ENCODE measurements at regions of chr6 and their contacts with region 1.

Region 1: DNA sequence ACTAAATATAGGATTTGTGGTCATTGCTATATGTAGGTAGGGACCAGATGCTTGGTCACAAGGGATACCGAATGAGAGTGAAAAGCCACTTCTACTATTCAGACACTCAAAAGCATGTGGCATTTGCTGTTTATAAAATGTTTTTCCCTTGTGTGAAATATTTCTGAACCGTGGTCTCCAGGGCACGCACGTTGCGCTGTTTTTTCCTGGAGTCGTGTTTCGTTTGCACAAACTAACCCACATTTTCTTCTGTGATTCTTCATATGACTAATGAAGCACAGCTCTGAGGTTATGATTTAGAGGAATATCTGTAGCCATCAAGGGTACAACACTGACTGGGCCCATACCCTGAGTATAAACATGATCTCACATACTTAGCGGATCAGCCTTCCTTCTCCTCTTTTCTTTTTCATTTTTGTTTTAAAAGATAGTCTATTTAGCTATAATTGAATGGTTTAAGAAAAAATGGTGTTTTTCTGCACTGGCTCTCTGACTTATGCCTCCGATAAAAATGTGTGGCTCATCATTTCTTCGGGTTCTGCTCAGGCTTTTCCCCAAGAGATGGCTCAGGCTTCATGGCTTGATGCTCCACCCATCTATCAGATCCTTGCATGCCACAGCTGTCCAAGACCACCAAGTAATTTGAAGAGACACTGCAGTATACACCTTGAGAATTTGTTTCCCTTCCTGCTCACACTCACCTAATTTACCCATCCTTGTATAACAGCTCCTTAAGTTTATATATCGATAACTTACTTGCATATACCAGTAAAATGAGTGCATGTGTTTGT is 59.9 kb upstream of the HBS1L start:
- DNase-seq: peak; percentile 82
- ATAC-seq: peak; percentile 70
- H3K4me3 Mint-ChIP-seq: peak overlapping the region; percentile 54
- H3K27ac Mint-ChIP-seq: peak overlapping the region; percentile 95
- H3K4me1 Mint-ChIP-seq: peaks cover 79% of the 10 kb centered on the region
- H3K27me3 Mint-ChIP-seq: no peaks in the 10 kb centered on the region

Region 2: GRCh38 chr6:134247231-134247833 is 867.2 kb before region 1 on chr6:
- CTCF ChIA-PET with region 1: no interaction called
- POLR2A ChIA-PET with region 1: no interaction called
- intact Hi-C with region 1: loop called in 1 of 2 experiments (anchors 10 kb)
- DNase-seq: peak; percentile 84
- ATAC-seq: peak; percentile 91
- H3K4me3 Mint-ChIP-seq: peak overlapping the region; percentile 16
- H3K27ac Mint-ChIP-seq: peak overlapping the region; percentile 94
- H3K4me1 Mint-ChIP-seq: peaks cover 56% of the 10 kb centered on the region
- H3K27me3 Mint-ChIP-seq: no peaks in the 10 kb centered on the region

Region 3: GRCh38 chr6:135014353-135014832 is 100.2 kb before region 1 on chr6:
- CTCF ChIA-PET with region 1: no interaction called
- POLR2A ChIA-PET with region 1: no interaction called
- intact Hi-C with region 1: loop called in 1 of 2 experiments (anchors 1 kb)
- DNase-seq: peak; percentile 23
- ATAC-seq: peak; percentile 87
- H3K4me3 Mint-ChIP-seq: peak overlapping the region; percentile 18
- H3K27ac Mint-ChIP-seq: peak overlapping the region; percentile 45
- H3K4me1 Mint-ChIP-seq: peaks cover 59% of the 10 kb centered on the region
- H3K27me3 Mint-ChIP-seq: no peaks in the 10 kb centered on the region

Region 4: DNA sequence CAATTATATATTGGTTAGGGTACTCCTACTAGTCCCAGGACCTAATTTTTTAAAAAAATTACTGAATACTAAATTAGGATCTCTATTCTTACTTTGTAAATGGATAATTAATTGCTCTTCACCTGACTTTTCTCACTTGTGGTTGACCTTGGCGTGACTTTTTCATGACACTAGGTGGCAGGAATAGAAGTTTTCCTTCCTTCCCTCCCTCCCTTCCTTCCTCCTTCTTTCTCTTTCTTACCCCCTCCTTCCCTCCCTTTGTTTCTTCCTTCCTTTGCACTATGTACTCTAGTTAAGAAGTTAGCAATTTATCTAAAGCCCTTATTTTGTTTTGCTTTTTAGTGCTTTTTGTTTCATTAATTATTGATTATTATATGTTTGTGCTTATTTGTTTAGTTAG is 39.5 kb before region 1 on chr6:
- CTCF ChIA-PET with region 1: no interaction called
- POLR2A ChIA-PET with region 1: no interaction called
- intact Hi-C with region 1: no loop called
- DNase-seq: no peak
- ATAC-seq: no peak
- H3K4me3 Mint-ChIP-seq: no peak overlapping the region
- H3K27ac Mint-ChIP-seq: no peak overlapping the region
- H3K4me1 Mint-ChIP-seq: peaks cover 15% of the 10 kb centered on the region
- H3K27me3 Mint-ChIP-seq: no peaks in the 10 kb centered on the region

Region 5: DNA sequence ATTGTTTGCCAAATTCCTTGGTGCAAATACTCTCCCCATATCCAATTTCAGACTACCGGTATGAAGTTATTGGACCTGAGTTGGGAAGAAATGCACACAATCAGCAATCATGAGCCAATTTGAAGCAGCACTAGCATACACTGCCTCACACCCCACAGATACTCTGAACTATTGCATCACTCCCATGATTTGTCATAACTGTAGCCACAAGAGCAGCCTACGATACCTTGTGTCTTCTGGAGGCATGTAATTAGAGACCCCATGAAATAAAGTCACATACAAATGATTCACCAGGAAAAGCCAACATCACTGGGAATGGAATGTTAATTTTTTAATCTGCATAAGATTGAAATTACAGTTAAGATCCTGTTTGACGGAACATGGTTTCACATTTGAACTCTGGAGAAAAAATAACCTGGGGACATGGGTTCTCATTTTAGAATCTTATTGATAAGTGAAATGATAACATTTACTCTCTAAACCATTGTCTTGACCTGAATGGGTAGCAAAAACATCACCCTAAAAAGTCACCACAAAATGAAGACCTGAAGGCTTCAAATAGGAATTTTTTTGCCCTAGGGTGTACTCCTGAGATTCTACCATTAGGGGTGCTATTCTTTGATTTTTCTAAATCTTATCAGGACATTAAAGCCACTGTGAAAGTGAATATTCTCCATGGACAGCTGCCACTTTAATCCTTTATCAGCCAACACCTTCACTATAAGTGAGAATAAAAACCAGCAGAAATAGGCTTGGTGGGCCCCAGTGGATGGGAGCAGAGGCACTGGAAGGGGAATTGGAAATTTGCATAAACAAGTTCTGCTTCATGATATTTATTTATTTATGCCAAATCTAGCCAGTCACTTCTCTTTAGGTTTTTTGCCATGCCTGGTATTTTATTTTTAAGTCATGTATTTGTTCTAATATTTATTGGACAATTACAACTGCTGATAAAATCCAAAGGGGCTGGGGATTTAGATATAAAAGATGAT is 25.4 kb before region 1 on chr6:
- CTCF ChIA-PET with region 1: interaction called, 19 read pairs
- POLR2A ChIA-PET with region 1: interaction called, 7 read pairs
- intact Hi-C with region 1: loop called (anchors 1 kb)
- DNase-seq: peak; percentile 54
- ATAC-seq: peak; percentile 77
- H3K4me3 Mint-ChIP-seq: peak overlapping the region; percentile 48
- H3K27ac Mint-ChIP-seq: peak overlapping the region; percentile 93
- H3K4me1 Mint-ChIP-seq: peaks cover 86% of the 10 kb centered on the region
- H3K27me3 Mint-ChIP-seq: no peaks in the 10 kb centered on the region

Region 6: DNA sequence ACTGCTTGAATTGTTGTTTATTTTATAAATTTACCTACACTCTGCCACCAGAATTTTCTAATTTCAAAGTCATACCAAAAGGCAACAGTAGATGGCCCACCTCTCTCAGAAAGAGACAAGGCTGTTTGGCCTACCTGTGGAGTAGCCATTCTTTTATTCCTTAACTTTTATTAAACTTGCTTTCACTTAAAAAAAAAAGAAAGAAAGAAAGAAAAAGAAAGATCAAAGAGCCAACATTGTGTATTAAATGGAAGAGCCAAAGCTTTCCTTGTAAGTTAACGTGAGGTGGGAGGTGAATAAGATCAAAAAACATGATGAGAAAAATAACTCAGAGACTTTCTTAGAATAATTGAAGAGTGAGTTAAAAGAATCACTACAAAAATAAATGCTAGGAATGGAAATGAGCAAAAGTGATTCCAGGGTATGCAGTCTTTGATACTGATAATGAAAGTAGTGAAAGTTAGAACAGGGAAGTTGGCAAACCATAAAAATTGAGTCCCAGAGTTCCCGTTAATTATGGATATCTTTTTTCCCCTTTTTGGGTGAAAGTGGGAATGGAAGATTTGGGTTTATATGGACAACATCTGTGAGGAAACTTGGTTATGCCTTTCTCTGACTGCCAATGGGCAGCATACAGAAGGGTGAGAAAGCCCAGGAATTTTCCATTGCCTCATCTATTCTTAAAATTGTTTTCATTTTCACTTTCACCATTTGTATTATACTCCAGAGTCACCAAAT is 30.7 kb after region 1 on chr6:
- CTCF ChIA-PET with region 1: interaction called, 5 read pairs
- POLR2A ChIA-PET with region 1: no interaction called
- intact Hi-C with region 1: loop called (anchors 1 kb)
- DNase-seq: no peak
- ATAC-seq: peak; percentile 52
- H3K4me3 Mint-ChIP-seq: peak overlapping the region; percentile 2
- H3K27ac Mint-ChIP-seq: peak overlapping the region; percentile 88
- H3K4me1 Mint-ChIP-seq: peaks cover 65% of the 10 kb centered on the region
- H3K27me3 Mint-ChIP-seq: no peaks in the 10 kb centered on the region

Region 7: DNA sequence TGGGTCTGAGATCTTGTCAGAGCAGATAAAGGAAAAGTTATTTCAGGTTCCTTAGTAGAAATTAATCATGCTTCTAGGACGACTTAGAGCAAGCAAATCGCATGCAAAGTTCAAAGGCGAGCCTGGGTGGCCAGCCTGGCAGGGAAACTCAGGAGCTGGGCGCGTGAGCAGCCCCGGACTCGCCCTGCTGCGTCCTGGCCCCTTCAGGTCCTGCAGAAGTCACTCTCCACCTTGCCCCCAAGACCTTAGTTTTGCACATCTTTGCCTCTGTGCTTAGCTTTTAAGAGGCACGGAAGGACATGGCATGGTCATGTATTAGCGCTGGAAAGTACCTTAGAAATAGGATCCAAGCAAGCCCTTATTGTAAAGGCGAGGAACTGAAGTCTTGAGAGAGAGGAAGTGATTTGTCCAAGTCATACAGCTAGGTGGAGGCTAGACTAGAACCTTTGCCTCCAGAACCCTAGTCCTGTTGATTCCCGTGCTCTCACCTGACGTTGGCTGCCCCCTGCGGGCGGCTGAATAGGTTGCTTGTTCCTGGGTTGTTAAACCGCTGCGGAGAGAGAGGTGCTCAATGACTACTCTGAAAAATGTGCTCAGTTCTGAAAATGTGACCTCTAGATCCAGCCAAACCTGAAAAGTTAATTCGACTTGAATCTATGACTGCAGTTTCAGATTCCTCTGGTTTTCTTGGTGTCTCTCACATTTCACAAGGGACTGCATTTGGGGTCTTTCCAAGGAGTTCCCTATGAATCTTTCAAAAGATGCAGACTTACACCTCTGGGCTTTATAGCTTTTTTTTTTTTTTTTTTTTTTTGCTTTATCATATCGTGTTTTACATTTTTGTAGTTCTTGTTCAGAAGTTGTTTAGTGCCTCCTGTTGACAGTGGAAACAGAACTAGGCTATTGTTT is 69.2 kb after region 1 on chr6:
- CTCF ChIA-PET with region 1: interaction called, 10 read pairs
- POLR2A ChIA-PET with region 1: interaction called, 7 read pairs
- intact Hi-C with region 1: loop called (anchors 1 kb)
- DNase-seq: peak; percentile 92
- ATAC-seq: peak; percentile 55
- H3K4me3 Mint-ChIP-seq: peak overlapping the region; percentile 91
- H3K27ac Mint-ChIP-seq: peak overlapping the region; percentile 93
- H3K4me1 Mint-ChIP-seq: peaks cover 26% of the 10 kb centered on the region
- H3K27me3 Mint-ChIP-seq: no peaks in the 10 kb centered on the region